Sigmoid colon (tissue), 7 donors: ENCODE measurements at regions of chr12 and their contacts with region 1.

Region 1: GRCh38 chr12:111753144-111753881 is 13.4 kb upstream of the ALDH2 start:
- DNase-seq: peak; percentile 84
- H3K4me3 ChIP-seq: no peak overlapping the region
- H3K27ac ChIP-seq: no peak overlapping the region
- H3K4me1 ChIP-seq: peaks cover 0 to 19% (median 10%) of the 10 kb centered on the region in 4 donors
- H3K27me3 ChIP-seq: no peaks in the 10 kb centered on the region
- CTCF ChIP-seq: peak; percentile 64 to 87 (median 81)
- EP300 ChIP-seq: no peak
- POLR2A ChIP-seq: no peak

Region 2: GRCh38 chr12:111624540-111624939 is 128.8 kb before region 1 on chr12:
- intact Hi-C with region 1: no loop called
- DNase-seq: no peak
- H3K4me3 ChIP-seq: no peak overlapping the region
- H3K27ac ChIP-seq: no peak overlapping the region
- H3K4me1 ChIP-seq: no peaks in the 10 kb centered on the region
- H3K27me3 ChIP-seq: no peaks in the 10 kb centered on the region
- CTCF ChIP-seq: no peak
- EP300 ChIP-seq: no peak
- POLR2A ChIP-seq: no peak

Region 3: GRCh38 chr12:111788178-111788654 is 34.9 kb after region 1 on chr12:
- intact Hi-C with region 1: loop called (anchors 2 kb)
- DNase-seq: peak; percentile 86
- H3K4me3 ChIP-seq: no peak overlapping the region
- H3K27ac ChIP-seq: peak overlapping the region; percentile 9 to 53 (median 36)
- H3K4me1 ChIP-seq: peaks cover 0 to 29% (median 27%) of the 10 kb centered on the region in 4 donors
- H3K27me3 ChIP-seq: no peaks in the 10 kb centered on the region
- CTCF ChIP-seq: peak in 3 of 4 experiments; percentile 20 to 45 (median 43)
- EP300 ChIP-seq: no peak
- POLR2A ChIP-seq: no peak

Region 4: GRCh38 chr12:112061137-112061536 is 307.8 kb after region 1 on chr12:
- intact Hi-C with region 1: no loop called
- DNase-seq: no peak
- H3K4me3 ChIP-seq: no peak overlapping the region
- H3K27ac ChIP-seq: no peak overlapping the region
- H3K4me1 ChIP-seq: no peaks in the 10 kb centered on the region
- H3K27me3 ChIP-seq: no peaks in the 10 kb centered on the region
- CTCF ChIP-seq: no peak
- EP300 ChIP-seq: no peak
- POLR2A ChIP-seq: no peak